ENCODE measurements at regions of chr15 and their contacts with region 1.

Region 1: GRCh38 chr15:57364282-57365007 is 11.9 kb upstream of the CGNL1 start:
- DNase-seq: no peak
- H3K4me3 ChIP-seq: no peak overlapping the region
- H3K27me3 ChIP-seq: no peaks in the 10 kb centered on the region
- CTCF ChIP-seq: peak; percentile 49

Region 2: GRCh38 chr15:57320631-57321220 is 43.7 kb before region 1 on chr15:
- CTCF ChIA-PET with region 1: no interaction called
- POLR2A ChIA-PET with region 1: no interaction called
- DNase-seq: no peak
- H3K4me3 ChIP-seq: no peak overlapping the region
- H3K27me3 ChIP-seq: no peaks in the 10 kb centered on the region
- CTCF ChIP-seq: no peak

Region 3: DNA sequence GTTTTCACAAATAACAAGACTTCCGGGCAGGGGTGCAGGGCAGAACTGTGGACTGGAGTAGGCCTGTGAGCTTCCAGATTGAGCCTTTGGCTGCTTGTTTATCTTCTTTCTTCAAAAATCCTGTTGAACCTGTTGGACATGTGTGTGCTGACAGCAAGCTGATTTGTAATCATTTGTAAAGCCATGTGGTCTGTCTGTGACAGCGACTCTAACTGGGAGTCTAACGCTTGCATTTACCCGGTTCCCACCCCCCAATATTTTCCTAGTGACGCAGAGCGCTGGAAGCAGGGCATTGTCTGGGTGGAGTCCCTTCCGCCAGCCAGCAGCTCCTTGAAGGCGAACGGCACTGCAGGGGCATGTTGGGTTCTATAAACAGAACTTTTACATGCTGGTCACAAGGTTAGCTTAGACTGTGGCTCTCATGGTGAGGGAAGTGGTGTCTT is 141.5 kb after region 1 on chr15:
- CTCF ChIA-PET with region 1: no interaction called
- POLR2A ChIA-PET with region 1: interaction called, 15 read pairs
- DNase-seq: peak; percentile 39
- H3K4me3 ChIP-seq: no peak overlapping the region
- H3K27me3 ChIP-seq: no peaks in the 10 kb centered on the region
- CTCF ChIP-seq: no peak

Measured in BJ (cell line).